ENCODE measurements at regions of chr9 and their contacts with region 1.

Region 1: DNA sequence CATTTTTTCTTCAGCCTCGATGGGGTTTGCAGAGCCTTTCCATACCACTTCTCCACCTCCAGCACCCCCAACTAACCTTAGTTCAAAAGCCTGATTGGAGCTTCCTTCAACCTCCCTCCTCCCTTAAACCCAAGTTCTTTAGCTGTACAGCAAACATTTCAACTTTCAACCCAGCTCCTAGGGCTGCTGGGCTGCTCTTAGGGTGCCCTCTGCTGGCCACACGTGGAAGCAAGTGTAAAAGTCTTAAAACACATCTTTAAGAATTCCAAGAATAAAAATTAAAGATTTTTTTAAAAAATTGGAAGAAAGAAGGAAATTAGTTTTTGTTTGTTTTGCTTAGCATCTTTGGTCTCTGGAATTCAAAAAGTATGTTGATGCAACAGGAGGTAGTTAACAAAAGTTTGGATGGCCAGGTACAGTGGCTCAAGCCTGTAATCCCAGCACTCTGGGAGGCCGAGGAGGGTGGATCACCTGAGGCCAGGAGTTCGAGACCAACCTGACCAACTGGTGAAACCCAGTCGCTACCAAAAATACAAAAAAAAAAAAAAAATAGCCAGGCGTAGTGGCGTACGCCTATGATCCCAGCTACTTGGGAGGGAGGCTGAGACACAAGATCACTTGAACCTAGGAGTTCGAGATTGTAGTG is 15.5 kb upstream of the HSD17B3 start:
- DNase-seq: no peak
- ATAC-seq: peak; percentile 73
- H3K4me3 Mint-ChIP-seq: no peak overlapping the region
- H3K27ac Mint-ChIP-seq: no peak overlapping the region
- H3K4me1 Mint-ChIP-seq: peaks cover 18% of the 10 kb centered on the region
- H3K27me3 Mint-ChIP-seq: peaks cover 5% of the 10 kb centered on the region; the same call in 1 of the 2 replicates
- CTCF ChIP-seq: peak; percentile 61

Region 2: DNA sequence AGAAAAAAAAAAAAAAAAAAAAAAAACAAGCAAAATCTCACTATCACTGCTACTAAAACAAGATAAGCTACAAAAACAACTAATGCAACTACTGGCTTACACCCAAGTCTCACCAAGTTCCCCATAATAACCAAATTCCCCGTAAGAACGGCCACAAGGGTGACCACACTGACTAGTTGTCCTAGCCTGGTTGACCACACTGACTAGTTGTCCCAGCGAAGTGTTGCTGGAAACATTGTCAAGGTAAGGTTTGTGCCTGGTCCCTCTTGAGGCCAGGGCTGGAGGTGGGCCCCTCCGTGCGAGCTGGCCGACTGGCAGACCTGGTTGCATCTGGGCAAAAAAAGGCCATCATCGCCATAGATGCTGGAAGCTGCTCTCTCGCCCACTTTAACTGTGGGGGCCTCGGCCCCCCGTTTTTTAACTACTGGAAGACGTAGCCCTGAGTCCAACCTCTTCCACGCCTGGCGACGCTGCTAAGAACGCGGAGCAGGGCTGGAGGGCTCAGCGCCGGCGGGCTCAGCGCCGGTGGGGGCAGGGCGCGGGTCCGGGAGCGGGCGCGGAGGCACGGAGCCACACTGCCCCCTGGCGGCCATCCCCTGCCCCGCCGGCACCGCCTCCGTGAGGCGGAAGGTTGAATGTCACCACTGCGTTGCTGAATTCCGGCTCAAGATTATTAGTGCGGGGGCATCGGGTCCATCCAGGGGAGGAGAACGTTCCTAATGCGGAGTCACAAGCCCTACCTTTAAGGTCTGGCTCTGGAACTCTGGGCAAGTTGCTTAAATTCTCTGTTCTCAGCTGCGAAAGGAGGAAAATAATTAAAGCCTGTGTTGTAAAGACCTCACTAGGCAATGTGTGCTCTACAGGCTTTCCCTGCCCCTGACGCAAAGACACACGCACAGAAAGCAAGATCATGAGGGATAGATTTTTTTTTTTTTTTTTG is 99.4 kb before region 1 on chr9:
- CTCF ChIA-PET with region 1: interaction called, 18 read pairs
- POLR2A ChIA-PET with region 1: no interaction called
- DNase-seq: peak; percentile 78
- ATAC-seq: peak; percentile 73
- H3K4me3 Mint-ChIP-seq: peak overlapping the region; percentile 54
- H3K27ac Mint-ChIP-seq: peak overlapping the region; percentile 26; the same call in 1 of the 2 replicates
- H3K4me1 Mint-ChIP-seq: peaks cover 18% of the 10 kb centered on the region
- H3K27me3 Mint-ChIP-seq: peaks cover 27% of the 10 kb centered on the region
- CTCF ChIP-seq: peak; percentile 97

Region 3: GRCh38 chr9:96232539-96233241 is 84.8 kb before region 1 on chr9:
- CTCF ChIA-PET with region 1: interaction called, 43 read pairs
- POLR2A ChIA-PET with region 1: no interaction called
- DNase-seq: peak; percentile 48
- ATAC-seq: peak; percentile 96
- H3K4me3 Mint-ChIP-seq: no peak overlapping the region
- H3K27ac Mint-ChIP-seq: no peak overlapping the region
- H3K4me1 Mint-ChIP-seq: no peaks in the 10 kb centered on the region
- H3K27me3 Mint-ChIP-seq: no peaks in the 10 kb centered on the region
- CTCF ChIP-seq: peak; percentile 69; the same call in 1 of the 2 replicates

Region 4: DNA sequence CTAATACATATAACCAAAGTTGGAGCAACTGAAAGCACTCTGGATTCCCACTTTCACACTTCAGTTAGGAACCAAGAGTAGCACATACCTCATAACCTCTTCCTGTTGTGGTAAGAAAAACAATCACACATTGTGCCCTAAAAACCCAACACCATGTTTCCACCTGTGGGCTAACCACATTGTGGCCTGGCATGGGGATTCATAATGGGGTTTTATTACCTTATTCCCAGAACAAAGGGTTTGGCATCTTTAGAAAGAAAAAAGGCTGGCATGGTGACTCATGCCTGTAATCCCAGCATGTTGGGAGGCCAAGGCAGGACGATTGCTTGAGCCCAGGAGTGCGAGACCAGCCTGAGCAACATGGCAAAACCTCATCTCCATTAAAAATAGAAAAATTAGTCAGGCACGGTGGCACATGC is 76.1 kb before region 1 on chr9:
- CTCF ChIA-PET with region 1: interaction called, 35 read pairs
- POLR2A ChIA-PET with region 1: no interaction called
- DNase-seq: no peak
- ATAC-seq: no peak
- H3K4me3 Mint-ChIP-seq: no peak overlapping the region
- H3K27ac Mint-ChIP-seq: no peak overlapping the region
- H3K4me1 Mint-ChIP-seq: peaks cover 2% of the 10 kb centered on the region; the same call in 1 of the 2 replicates
- H3K27me3 Mint-ChIP-seq: no peaks in the 10 kb centered on the region
- CTCF ChIP-seq: no peak

Region 5: GRCh38 chr9:96302021-96302420 is 15.4 kb before region 1 on chr9 and contains the start of gene HSD17B3:
- CTCF ChIA-PET with region 1: interaction called, 10 read pairs
- POLR2A ChIA-PET with region 1: no interaction called
- DNase-seq: no peak
- ATAC-seq: no peak
- H3K4me3 Mint-ChIP-seq: no peak within 1 kb of the TSS
- H3K27ac Mint-ChIP-seq: no peak within 1 kb of the TSS
- H3K4me1 Mint-ChIP-seq: peaks cover 11% of the 10 kb centered on the region
- H3K27me3 Mint-ChIP-seq: no peaks in the 10 kb centered on the region; the same call in 1 of the 2 replicates
- CTCF ChIP-seq: no peak
- total RNA-seq, gene HSD17B3: not detected in 3 replicates

Region 6: DNA sequence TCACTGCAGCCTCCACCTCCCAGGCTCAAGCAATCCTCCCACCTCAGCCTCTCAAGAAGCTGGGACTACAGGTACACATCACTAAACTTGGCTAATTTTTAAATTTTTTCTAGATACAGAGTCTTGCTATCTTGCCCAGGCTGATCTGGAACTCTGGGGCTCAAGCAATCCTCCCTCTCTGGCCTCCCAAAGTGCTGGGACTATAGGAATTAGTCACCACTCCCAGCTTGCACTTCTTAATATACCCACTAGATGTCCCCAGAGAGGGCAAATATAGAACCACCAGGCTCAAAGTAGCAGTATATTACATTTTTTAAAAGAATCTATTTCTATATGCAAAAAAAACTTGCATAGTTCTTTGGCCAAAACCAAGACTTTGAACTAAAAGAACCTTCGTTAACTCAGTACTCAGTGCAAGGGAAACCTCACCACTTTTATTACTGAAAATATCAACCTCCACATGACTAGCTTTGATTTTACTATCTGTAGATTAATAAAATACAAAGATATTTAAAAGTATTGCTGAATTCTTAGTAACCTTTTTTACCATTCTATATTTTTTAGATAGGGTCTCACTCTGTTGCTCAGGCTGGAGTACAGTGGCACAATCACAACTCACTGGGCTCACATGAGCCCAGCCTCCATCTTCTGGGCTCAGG is 10.4 kb after region 1 on chr9:
- CTCF ChIA-PET with region 1: interaction called, 25 read pairs
- POLR2A ChIA-PET with region 1: no interaction called
- DNase-seq: no peak
- ATAC-seq: peak; percentile 53; the same call in 1 of the 2 replicates
- H3K4me3 Mint-ChIP-seq: no peak overlapping the region
- H3K27ac Mint-ChIP-seq: no peak overlapping the region
- H3K4me1 Mint-ChIP-seq: peaks cover 13% of the 10 kb centered on the region
- H3K27me3 Mint-ChIP-seq: no peaks in the 10 kb centered on the region
- CTCF ChIP-seq: peak; percentile 70

Region 7: DNA sequence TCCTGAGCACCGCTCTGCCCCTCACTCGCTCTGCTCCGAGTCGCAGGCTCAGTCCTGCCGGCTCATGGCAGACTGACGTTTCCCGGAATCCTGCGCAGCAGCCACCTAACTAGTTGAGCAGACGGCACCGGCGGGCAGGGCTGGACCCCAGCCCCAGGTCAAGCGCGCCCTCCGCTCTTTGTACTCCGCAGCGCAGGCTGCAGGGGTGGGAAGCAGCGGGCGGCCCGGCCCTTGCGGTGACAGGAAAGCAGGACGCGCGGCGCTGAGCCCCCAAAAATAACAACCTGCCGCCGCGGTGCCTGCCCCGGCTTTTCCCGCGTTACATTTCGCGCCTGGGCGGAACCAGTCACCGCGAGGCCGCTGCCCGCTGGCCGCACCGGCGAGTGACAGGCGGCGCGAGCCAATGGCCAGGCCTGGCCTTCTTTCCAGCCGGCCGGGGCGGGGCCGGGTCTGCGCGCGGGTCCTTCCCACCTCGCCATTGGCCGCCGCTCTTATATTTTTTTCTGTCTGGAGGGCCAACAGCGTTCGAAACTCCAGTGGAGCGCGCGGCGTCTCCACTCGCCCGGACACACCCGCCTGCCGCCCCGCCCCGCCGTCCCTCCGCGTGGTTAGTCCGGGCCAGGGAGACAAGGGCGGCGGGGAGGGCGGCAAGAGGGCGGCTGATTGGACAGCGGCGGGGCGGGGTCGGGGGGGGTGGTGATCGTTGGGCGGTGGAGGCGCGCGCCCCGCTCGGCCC is 100.8 kb after region 1 on chr9 and contains the start of gene ZNF367:
- CTCF ChIA-PET with region 1: no interaction called
- POLR2A ChIA-PET with region 1: no interaction called
- DNase-seq: peak; percentile 92
- ATAC-seq: peak; percentile 84
- H3K4me3 Mint-ChIP-seq: peak within 1 kb of the TSS; percentile 94
- H3K27ac Mint-ChIP-seq: peak within 1 kb of the TSS; percentile 92
- H3K4me1 Mint-ChIP-seq: peaks cover 38% of the 10 kb centered on the region
- H3K27me3 Mint-ChIP-seq: no peaks in the 10 kb centered on the region; the same call in 1 of the 2 replicates
- CTCF ChIP-seq: no peak
- total RNA-seq, gene ZNF367: 6.3 to 7.5 TPM (median 7.4 TPM) in 3 replicates

Region 8: GRCh38 chr9:96524764-96525163 is 207.3 kb after region 1 on chr9:
- CTCF ChIA-PET with region 1: no interaction called
- POLR2A ChIA-PET with region 1: no interaction called
- DNase-seq: no peak
- ATAC-seq: no peak
- H3K4me3 Mint-ChIP-seq: no peak overlapping the region
- H3K27ac Mint-ChIP-seq: no peak overlapping the region
- H3K4me1 Mint-ChIP-seq: no peaks in the 10 kb centered on the region
- H3K27me3 Mint-ChIP-seq: no peaks in the 10 kb centered on the region
- CTCF ChIP-seq: no peak

Measured in WTC11 (cell line).